ENCODE measurements at regions of chr3 and their contacts with region 1.

Region 1: GRCh38 chr3:57692259-57693147 is at the start of gene DENND6A:
- DNase-seq: peak; percentile 97 to 98
- ATAC-seq: peak; percentile 82 to 93 (median 88)
- H3K4me3 ChIP-seq: peak within 1 kb of the TSS; percentile 99
- H3K27ac ChIP-seq: peak within 1 kb of the TSS; percentile 100
- H3K4me1 ChIP-seq: peaks cover 35% of the 10 kb centered on the region
- H3K27me3 ChIP-seq: no peaks in the 10 kb centered on the region
- CTCF ChIP-seq: no peak
- total RNA-seq, gene DENND6A: 10.4 to 11.3 (median 10.5) TPM

Region 2: DNA sequence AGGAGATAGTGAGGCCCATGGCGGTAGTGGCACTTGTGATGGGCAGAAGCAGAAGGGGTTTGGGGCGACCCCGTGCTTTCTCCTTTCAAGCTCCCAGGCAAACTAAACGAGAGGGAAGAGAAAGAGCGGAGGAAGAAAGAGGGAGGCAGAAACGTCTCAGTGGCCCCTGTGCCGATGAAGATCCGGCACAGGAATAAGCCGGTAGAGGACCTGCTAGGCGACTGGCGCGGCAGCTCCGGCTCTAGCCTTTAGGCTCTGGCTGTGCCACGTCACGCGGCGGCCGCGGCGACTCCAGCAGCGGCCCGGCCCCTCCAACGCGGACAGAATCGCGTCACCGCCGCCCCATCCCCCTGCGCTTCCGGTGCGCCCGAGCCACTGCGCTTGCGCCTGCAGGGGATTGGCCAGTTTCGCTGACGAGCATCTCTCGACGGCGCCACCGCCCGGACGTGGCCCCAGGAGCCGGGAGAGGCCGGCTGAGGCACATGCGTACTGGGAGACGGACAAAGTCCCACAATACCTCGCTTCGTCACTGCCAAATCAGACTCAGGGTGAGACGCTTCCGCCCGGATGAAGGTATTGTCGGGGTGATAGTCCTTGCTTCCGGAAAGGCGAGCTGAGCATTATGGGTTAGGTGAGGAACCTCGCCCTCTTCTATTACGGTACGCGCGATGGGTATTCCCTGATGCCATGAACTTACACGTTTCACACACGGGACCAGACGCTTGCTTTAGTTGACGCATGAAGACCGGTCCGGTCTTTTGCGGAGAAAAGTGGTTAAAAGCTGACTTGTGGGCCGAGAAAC is 95.2 kb before region 1 on chr3 and contains the start of gene ARF4:
- intact Hi-C with region 1: loop called (anchors 2 to 10 kb)
- DNase-seq: peak; percentile 99 to 100
- ATAC-seq: peak; percentile 91 to 94 (median 92)
- H3K4me3 ChIP-seq: peak within 1 kb of the TSS; percentile 93
- H3K27ac ChIP-seq: peak within 1 kb of the TSS; percentile 98
- H3K4me1 ChIP-seq: peaks cover 46% of the 10 kb centered on the region
- H3K27me3 ChIP-seq: no peaks in the 10 kb centered on the region
- CTCF ChIP-seq: peak; percentile 10
- total RNA-seq, gene ARF4: 37.7 to 76.7 (median 44.7) TPM

Region 3: GRCh38 chr3:57738391-57738790 is 45.9 kb after region 1 on chr3:
- intact Hi-C with region 1: loop called in 1 of 2 experiments (anchors 1 kb)
- DNase-seq: no peak
- ATAC-seq: peak in 2 of 4 donors; percentile 61 to 63
- H3K4me3 ChIP-seq: no peak overlapping the region
- H3K27ac ChIP-seq: peak overlapping the region; percentile 76
- H3K4me1 ChIP-seq: peaks cover 20% of the 10 kb centered on the region
- H3K27me3 ChIP-seq: no peaks in the 10 kb centered on the region
- CTCF ChIP-seq: no peak

Region 4: GRCh38 chr3:57755668-57756527 is 63.4 kb after region 1 on chr3 and contains the start of gene SLMAP:
- intact Hi-C with region 1: loop called (anchors 1 to 5 kb)
- DNase-seq: peak; percentile 97 to 99
- ATAC-seq: peak; percentile 97 to 99 (median 98)
- H3K4me3 ChIP-seq: peak within 1 kb of the TSS; percentile 98
- H3K27ac ChIP-seq: peak within 1 kb of the TSS; percentile 95
- H3K4me1 ChIP-seq: peaks cover 12% of the 10 kb centered on the region
- H3K27me3 ChIP-seq: no peaks in the 10 kb centered on the region
- CTCF ChIP-seq: no peak
- total RNA-seq, gene SLMAP: 106 to 180 (median 124) TPM

Region 5: GRCh38 chr3:57826245-57826951 is 133.9 kb after region 1 on chr3:
- intact Hi-C with region 1: loop called in 1 of 2 experiments (anchors 10 kb)
- DNase-seq: no peak
- ATAC-seq: peak in 1 of 4 donors; percentile 37
- H3K4me3 ChIP-seq: no peak overlapping the region
- H3K27ac ChIP-seq: no peak overlapping the region
- H3K4me1 ChIP-seq: peaks cover 56% of the 10 kb centered on the region
- H3K27me3 ChIP-seq: no peaks in the 10 kb centered on the region
- CTCF ChIP-seq: peak; percentile 13

Region 6: DNA sequence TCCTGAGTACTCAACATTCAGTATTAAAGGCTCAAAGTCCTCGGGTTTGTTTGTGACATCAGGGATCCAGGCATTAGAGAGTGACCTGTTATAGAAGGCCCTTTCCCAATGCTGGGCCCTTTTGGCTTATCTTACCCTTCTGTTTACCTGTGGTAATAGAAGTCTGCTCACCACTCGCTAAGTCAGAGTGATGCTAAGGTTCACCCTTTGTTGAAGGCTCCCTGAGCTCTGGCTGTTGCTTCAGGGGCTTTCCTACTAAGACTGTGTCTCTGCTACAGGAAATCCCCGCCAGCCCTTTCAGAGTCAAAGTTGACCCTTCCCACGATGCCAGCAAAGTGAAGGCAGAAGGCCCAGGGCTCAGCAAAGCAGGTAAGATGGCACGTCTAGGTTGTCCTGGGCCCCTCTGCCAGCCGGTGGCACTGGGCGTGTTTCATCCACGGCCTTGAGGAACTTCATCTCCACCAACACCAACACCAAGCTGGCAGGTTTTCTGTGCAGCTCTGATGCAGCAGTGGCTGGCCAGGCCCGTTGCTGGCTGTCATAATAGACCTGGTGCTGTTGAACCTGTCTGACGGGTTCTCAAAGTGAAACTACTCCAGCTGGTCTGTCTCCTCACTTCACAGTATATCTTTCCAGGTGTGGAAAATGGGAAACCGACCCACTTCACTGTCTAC is 419.1 kb after region 1 on chr3:
- intact Hi-C with region 1: no loop called
- DNase-seq: no peak
- ATAC-seq: no peak
- H3K4me3 ChIP-seq: no peak overlapping the region
- H3K27ac ChIP-seq: no peak overlapping the region
- H3K4me1 ChIP-seq: no peaks in the 10 kb centered on the region
- H3K27me3 ChIP-seq: no peaks in the 10 kb centered on the region
- CTCF ChIP-seq: no peak